Activated CD8-positive, alpha-beta T cell treated with anti-CD3 and anti-CD28 coated beads, Interleukin-2, amount 10 ng/mL, durations not matched to agents 7 days and 5 days (primary cell): ENCODE measurements at regions of chr3 and their contacts with region 1.

Region 1: DNA sequence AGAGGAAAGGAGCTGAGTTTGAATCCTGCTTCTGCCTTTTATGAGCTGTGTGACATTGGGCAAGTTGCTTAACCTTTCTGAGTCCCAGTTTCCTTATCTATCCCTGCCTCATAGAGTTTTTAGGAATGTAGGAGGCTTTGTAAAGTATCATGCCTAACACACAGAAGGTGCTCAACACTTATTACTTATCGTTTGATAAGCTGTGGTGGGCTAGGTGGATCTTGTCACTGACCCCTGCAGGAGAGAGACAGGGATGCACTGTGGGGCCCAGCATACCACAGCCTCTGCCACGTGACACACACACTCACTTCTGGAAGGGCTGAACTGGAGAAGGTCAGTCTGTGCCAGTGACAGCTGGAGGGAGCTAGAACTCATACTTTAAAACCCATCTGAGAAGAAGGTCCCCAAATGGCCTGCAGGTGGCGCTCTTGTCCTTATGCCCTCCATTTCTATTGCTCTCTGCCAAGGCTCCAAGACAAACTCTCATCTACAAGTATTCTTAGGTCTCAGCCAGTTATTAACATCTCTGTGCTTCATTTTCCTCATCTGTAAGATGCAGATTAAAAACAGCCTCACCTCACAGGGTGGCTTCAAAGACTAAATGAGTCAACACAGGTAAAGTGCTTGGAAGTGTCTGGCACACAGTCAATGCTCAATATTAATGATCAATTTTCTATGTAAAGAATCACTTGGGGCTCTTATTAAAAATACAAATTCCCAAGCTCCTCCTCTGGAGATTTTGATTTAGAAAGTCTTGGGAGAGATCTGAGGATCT is 57.5 kb upstream of the HACD2 start:
- DNase-seq: peak; percentile 77
- ATAC-seq: peak; percentile 83
- H3K4me3 Mint-ChIP-seq: no peak overlapping the region
- H3K27ac Mint-ChIP-seq: no peak overlapping the region
- H3K4me1 Mint-ChIP-seq: no peaks in the 10 kb centered on the region
- H3K27me3 Mint-ChIP-seq: no peaks in the 10 kb centered on the region

Region 2: GRCh38 chr3:123652346-123652984 is 10.1 kb after region 1 on chr3:
- CTCF ChIA-PET with region 1: interaction called, 45 read pairs
- POLR2A ChIA-PET with region 1: no interaction called
- DNase-seq: peak; percentile 48
- ATAC-seq: peak; percentile 53
- H3K4me3 Mint-ChIP-seq: no peak overlapping the region
- H3K27ac Mint-ChIP-seq: no peak overlapping the region
- H3K4me1 Mint-ChIP-seq: no peaks in the 10 kb centered on the region
- H3K27me3 Mint-ChIP-seq: no peaks in the 10 kb centered on the region

Region 3: GRCh38 chr3:123660900-123661299 is 18.5 kb after region 1 on chr3:
- CTCF ChIA-PET with region 1: interaction called, 45 read pairs
- POLR2A ChIA-PET with region 1: no interaction called
- DNase-seq: no peak
- ATAC-seq: no peak
- H3K4me3 Mint-ChIP-seq: no peak overlapping the region
- H3K27ac Mint-ChIP-seq: no peak overlapping the region
- H3K4me1 Mint-ChIP-seq: no peaks in the 10 kb centered on the region
- H3K27me3 Mint-ChIP-seq: peaks cover 8% of the 10 kb centered on the region

Region 4: DNA sequence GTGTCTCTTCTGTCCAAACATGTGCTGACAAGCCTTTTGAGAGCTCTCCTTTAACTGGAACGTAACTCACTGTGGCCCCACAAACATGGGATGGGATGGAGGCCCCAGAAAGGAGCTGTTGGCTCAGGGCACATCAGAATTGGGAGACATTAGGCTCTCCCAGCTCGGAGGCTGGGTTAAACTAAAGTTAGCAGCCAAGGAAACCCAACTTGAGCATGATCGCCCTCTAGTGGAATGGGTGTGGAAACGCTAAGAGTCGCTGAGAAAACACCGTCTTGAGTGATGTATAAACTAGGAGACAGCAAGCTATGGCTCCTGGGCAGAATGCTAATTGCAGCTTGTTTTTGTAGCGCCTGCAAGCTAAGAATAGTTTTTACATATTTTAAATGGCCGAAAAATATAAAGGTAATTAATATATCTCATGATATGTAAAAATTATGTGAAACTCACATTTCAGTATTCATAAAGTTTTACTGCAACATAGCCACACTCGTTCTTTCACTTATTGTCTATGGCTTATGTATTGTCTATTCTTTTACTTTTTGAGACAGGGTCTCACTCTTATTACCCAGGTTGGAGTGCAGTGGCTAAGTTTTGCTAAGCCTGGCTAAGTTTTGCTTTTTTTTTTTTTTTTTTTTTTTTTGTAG is 81.3 kb after region 1 on chr3:
- CTCF ChIA-PET with region 1: interaction called, 23 read pairs
- POLR2A ChIA-PET with region 1: no interaction called
- DNase-seq: peak; percentile 70
- ATAC-seq: peak; percentile 81
- H3K4me3 Mint-ChIP-seq: no peak overlapping the region
- H3K27ac Mint-ChIP-seq: peak overlapping the region; percentile 39
- H3K4me1 Mint-ChIP-seq: no peaks in the 10 kb centered on the region
- H3K27me3 Mint-ChIP-seq: peaks cover 6% of the 10 kb centered on the region